ENCODE measurements at regions of chr7 and their contacts with region 1.

Region 1: GRCh38 chr7:31373337-31374289 is 33.1 kb upstream of the NEUROD6 start:
- DNase-seq: peak; percentile 62
- H3K4me3 Mint-ChIP-seq: no peak overlapping the region
- H3K27ac Mint-ChIP-seq: no peak overlapping the region
- H3K4me1 Mint-ChIP-seq: no peaks in the 10 kb centered on the region
- H3K27me3 Mint-ChIP-seq: peaks cover 19% of the 10 kb centered on the region
- CTCF ChIP-seq: peak; percentile 82

Region 2: DNA sequence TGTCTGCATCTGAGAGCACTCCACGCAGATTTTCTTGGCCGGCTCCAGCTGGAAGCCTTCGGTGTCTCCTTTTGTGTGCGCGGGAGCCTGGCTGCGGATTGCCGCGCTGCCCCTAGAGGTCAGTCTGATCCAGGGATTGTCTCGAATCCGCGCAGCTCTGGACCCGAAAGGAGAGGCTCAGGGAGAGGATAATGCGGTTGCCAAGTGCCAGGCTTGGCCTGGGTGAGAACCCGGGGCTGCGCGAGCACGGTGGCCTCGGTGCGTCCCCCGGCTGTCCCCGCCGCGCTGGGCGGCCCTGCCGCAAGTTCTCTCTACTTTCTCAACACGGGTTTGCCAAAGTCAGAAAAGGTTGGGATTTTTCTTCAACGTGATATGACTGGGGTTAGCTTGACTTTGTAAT is 180.6 kb before region 1 on chr7:
- CTCF ChIA-PET with region 1: interaction called, 13 read pairs
- POLR2A ChIA-PET with region 1: no interaction called
- intact Hi-C with region 1: loop called (anchors 1 kb)
- DNase-seq: peak; percentile 64
- H3K4me3 Mint-ChIP-seq: no peak overlapping the region
- H3K27ac Mint-ChIP-seq: no peak overlapping the region
- H3K4me1 Mint-ChIP-seq: no peaks in the 10 kb centered on the region
- H3K27me3 Mint-ChIP-seq: peaks cover 22% of the 10 kb centered on the region
- CTCF ChIP-seq: peak; percentile 67

Region 3: GRCh38 chr7:31327071-31327470 is 46.5 kb before region 1 on chr7:
- CTCF ChIA-PET with region 1: no interaction called
- POLR2A ChIA-PET with region 1: no interaction called
- intact Hi-C with region 1: no loop called
- DNase-seq: no peak
- H3K4me3 Mint-ChIP-seq: no peak overlapping the region
- H3K27ac Mint-ChIP-seq: no peak overlapping the region
- H3K4me1 Mint-ChIP-seq: no peaks in the 10 kb centered on the region
- H3K27me3 Mint-ChIP-seq: peaks cover 12% of the 10 kb centered on the region
- CTCF ChIP-seq: no peak

Region 4: DNA sequence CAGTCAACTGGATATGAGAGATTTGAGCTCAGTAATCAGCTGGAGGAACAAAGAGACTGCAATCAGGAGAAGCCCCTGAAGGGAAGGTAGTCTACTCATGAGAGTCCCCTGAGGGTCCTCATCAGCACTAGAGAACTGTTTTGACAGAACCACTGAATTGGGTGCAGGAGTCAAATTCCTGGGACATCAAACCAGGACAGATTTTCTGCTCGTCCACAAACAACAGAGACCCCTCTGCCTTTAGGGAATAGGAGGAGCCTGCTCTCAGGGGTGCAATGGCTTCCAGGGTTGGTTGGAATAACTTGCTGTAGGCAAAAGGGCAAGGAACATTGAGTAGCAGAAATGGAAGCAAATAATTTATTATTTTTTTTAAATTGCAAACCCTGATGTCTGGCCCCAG is 11.2 kb before region 1 on chr7:
- CTCF ChIA-PET with region 1: interaction called, 22 read pairs
- POLR2A ChIA-PET with region 1: interaction called, 3 read pairs
- intact Hi-C with region 1: no loop called
- DNase-seq: no peak
- H3K4me3 Mint-ChIP-seq: no peak overlapping the region
- H3K27ac Mint-ChIP-seq: no peak overlapping the region
- H3K4me1 Mint-ChIP-seq: no peaks in the 10 kb centered on the region
- H3K27me3 Mint-ChIP-seq: peaks cover 18% of the 10 kb centered on the region
- CTCF ChIP-seq: no peak

Region 5: GRCh38 chr7:31408140-31408745 is 34.6 kb after region 1 on chr7:
- CTCF ChIA-PET with region 1: interaction called, 12 read pairs
- POLR2A ChIA-PET with region 1: no interaction called
- intact Hi-C with region 1: no loop called
- DNase-seq: peak; percentile 60
- H3K4me3 Mint-ChIP-seq: no peak overlapping the region
- H3K27ac Mint-ChIP-seq: peak overlapping the region; percentile 77
- H3K4me1 Mint-ChIP-seq: peaks cover 7% of the 10 kb centered on the region
- H3K27me3 Mint-ChIP-seq: no peaks in the 10 kb centered on the region
- CTCF ChIP-seq: no peak

Region 6: DNA sequence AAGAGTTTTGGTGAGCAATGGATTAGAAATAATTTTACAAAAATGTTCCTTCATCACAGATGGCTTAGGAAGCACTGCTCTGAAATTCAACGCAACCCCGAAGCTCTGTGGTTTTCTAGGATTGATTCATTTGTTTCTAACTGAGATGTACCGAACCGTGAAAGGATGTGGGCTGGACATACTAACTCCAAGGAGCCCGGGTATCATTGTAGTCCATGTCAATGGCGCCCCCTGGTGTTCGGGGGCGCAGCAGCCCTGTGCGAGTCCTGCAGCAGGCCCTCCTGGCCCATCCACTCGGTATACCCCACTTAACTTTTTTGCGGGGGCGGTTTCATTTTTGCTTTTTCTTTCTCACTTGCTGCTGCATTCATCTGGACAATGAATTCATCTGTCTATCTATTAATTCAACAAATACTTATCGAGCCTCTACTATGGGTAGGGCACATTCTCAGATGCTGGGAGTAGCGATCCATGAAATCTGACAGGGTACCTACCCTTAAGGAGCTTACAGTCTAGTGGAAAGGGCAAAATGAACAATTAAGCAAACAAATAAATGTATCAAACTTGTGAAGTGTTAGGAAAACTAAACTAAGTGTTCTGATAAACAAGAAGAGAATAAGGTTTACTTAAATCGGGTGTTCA is 115.1 kb after region 1 on chr7:
- CTCF ChIA-PET with region 1: interaction called, 28 read pairs
- POLR2A ChIA-PET with region 1: no interaction called
- intact Hi-C with region 1: loop called (anchors 1 kb)
- DNase-seq: peak; percentile 65
- H3K4me3 Mint-ChIP-seq: no peak overlapping the region
- H3K27ac Mint-ChIP-seq: no peak overlapping the region
- H3K4me1 Mint-ChIP-seq: no peaks in the 10 kb centered on the region
- H3K27me3 Mint-ChIP-seq: no peaks in the 10 kb centered on the region
- CTCF ChIP-seq: peak; percentile 77

Region 7: GRCh38 chr7:31642681-31643116 is 269.1 kb after region 1 on chr7:
- CTCF ChIA-PET with region 1: interaction called, 11 read pairs
- POLR2A ChIA-PET with region 1: interaction called, 3 read pairs
- intact Hi-C with region 1: no loop called
- DNase-seq: no peak
- H3K4me3 Mint-ChIP-seq: no peak overlapping the region
- H3K27ac Mint-ChIP-seq: no peak overlapping the region
- H3K4me1 Mint-ChIP-seq: no peaks in the 10 kb centered on the region
- H3K27me3 Mint-ChIP-seq: peaks cover 15% of the 10 kb centered on the region
- CTCF ChIP-seq: no peak